Caco-2 (cell line): ENCODE measurements at regions of chr16 and their contacts with region 1.

Region 1: GRCh38 chr16:77190478-77191258 is at the start of gene MON1B:
- DNase-seq: peak; percentile 98 to 99
- H3K4me3 ChIP-seq: peak within 1 kb of the TSS; percentile 88
- H3K4me3 Mint-ChIP-seq: peak within 1 kb of the TSS; percentile 84
- H3K27ac Mint-ChIP-seq: peak within 1 kb of the TSS; percentile 100
- H3K4me1 ChIP-seq: peaks cover 8% of the 10 kb centered on the region
- H3K4me1 Mint-ChIP-seq: peaks cover 19% of the 10 kb centered on the region
- H3K27me3 ChIP-seq: no peaks in the 10 kb centered on the region
- H3K27me3 Mint-ChIP-seq: peaks cover 3% of the 10 kb centered on the region
- CTCF ChIP-seq: peak in 1 of 2 experiments; percentile 11
- total RNA-seq, gene MON1B: 66.9 and 67.1 TPM in 2 replicates

Region 2: GRCh38 chr16:75576384-75576811 is 1614.3 kb before region 1 on chr16:
- CTCF ChIA-PET with region 1: no interaction called
- POLR2A ChIA-PET with region 1: no interaction called
- intact Hi-C with region 1: loop called (anchors 5 kb)
- DNase-seq: no peak
- H3K4me3 ChIP-seq: no peak overlapping the region
- H3K4me3 Mint-ChIP-seq: no peak overlapping the region
- H3K27ac Mint-ChIP-seq: no peak overlapping the region
- H3K4me1 ChIP-seq: no peaks in the 10 kb centered on the region
- H3K4me1 Mint-ChIP-seq: no peaks in the 10 kb centered on the region
- H3K27me3 ChIP-seq: no peaks in the 10 kb centered on the region
- H3K27me3 Mint-ChIP-seq: no peaks in the 10 kb centered on the region
- CTCF ChIP-seq: no peak

Region 3: GRCh38 chr16:76910931-76911330 is 279.7 kb before region 1 on chr16:
- CTCF ChIA-PET with region 1: no interaction called
- POLR2A ChIA-PET with region 1: no interaction called
- intact Hi-C with region 1: no loop called
- DNase-seq: no peak
- H3K4me3 ChIP-seq: no peak overlapping the region
- H3K4me3 Mint-ChIP-seq: no peak overlapping the region
- H3K27ac Mint-ChIP-seq: no peak overlapping the region
- H3K4me1 ChIP-seq: no peaks in the 10 kb centered on the region
- H3K4me1 Mint-ChIP-seq: no peaks in the 10 kb centered on the region
- H3K27me3 ChIP-seq: no peaks in the 10 kb centered on the region
- H3K27me3 Mint-ChIP-seq: peaks cover 7% of the 10 kb centered on the region
- CTCF ChIP-seq: no peak

Region 4: GRCh38 chr16:77143364-77143763 is 47.3 kb before region 1 on chr16:
- CTCF ChIA-PET with region 1: no interaction called
- POLR2A ChIA-PET with region 1: no interaction called
- intact Hi-C with region 1: no loop called
- DNase-seq: no peak
- H3K4me3 ChIP-seq: no peak overlapping the region
- H3K4me3 Mint-ChIP-seq: no peak overlapping the region
- H3K27ac Mint-ChIP-seq: no peak overlapping the region
- H3K4me1 ChIP-seq: no peaks in the 10 kb centered on the region
- H3K4me1 Mint-ChIP-seq: no peaks in the 10 kb centered on the region
- H3K27me3 ChIP-seq: no peaks in the 10 kb centered on the region
- H3K27me3 Mint-ChIP-seq: peaks cover 9% of the 10 kb centered on the region
- CTCF ChIP-seq: no peak

Region 5: GRCh38 chr16:77322757-77323156 is 132.1 kb after region 1 on chr16:
- CTCF ChIA-PET with region 1: no interaction called
- POLR2A ChIA-PET with region 1: no interaction called
- intact Hi-C with region 1: no loop called
- DNase-seq: no peak
- H3K4me3 ChIP-seq: no peak overlapping the region
- H3K4me3 Mint-ChIP-seq: no peak overlapping the region
- H3K27ac Mint-ChIP-seq: no peak overlapping the region
- H3K4me1 ChIP-seq: no peaks in the 10 kb centered on the region
- H3K4me1 Mint-ChIP-seq: no peaks in the 10 kb centered on the region
- H3K27me3 ChIP-seq: no peaks in the 10 kb centered on the region
- H3K27me3 Mint-ChIP-seq: no peaks in the 10 kb centered on the region
- CTCF ChIP-seq: no peak

Region 6: GRCh38 chr16:77480681-77481315 is 290.1 kb after region 1 on chr16:
- CTCF ChIA-PET with region 1: no interaction called
- POLR2A ChIA-PET with region 1: no interaction called
- intact Hi-C with region 1: no loop called
- DNase-seq: no peak
- H3K4me3 ChIP-seq: no peak overlapping the region
- H3K4me3 Mint-ChIP-seq: no peak overlapping the region
- H3K27ac Mint-ChIP-seq: no peak overlapping the region
- H3K4me1 ChIP-seq: no peaks in the 10 kb centered on the region
- H3K4me1 Mint-ChIP-seq: no peaks in the 10 kb centered on the region
- H3K27me3 ChIP-seq: 0 out of 2 replicates have a peak, but pooled peaks cover 2% of the 10 kb centered on the region
- H3K27me3 Mint-ChIP-seq: peaks cover 19% of the 10 kb centered on the region
- CTCF ChIP-seq: no peak